AG04449 (cell line): ENCODE measurements at regions of chr14 and their contacts with region 1.

Region 1: GRCh38 chr14:94129111-94129757 is at the start of gene IFI27L2:
- DNase-seq: no peak
- H3K4me3 ChIP-seq: peak within 1 kb of the TSS; percentile 73
- CTCF ChIP-seq: peak; percentile 29

Region 2: DNA sequence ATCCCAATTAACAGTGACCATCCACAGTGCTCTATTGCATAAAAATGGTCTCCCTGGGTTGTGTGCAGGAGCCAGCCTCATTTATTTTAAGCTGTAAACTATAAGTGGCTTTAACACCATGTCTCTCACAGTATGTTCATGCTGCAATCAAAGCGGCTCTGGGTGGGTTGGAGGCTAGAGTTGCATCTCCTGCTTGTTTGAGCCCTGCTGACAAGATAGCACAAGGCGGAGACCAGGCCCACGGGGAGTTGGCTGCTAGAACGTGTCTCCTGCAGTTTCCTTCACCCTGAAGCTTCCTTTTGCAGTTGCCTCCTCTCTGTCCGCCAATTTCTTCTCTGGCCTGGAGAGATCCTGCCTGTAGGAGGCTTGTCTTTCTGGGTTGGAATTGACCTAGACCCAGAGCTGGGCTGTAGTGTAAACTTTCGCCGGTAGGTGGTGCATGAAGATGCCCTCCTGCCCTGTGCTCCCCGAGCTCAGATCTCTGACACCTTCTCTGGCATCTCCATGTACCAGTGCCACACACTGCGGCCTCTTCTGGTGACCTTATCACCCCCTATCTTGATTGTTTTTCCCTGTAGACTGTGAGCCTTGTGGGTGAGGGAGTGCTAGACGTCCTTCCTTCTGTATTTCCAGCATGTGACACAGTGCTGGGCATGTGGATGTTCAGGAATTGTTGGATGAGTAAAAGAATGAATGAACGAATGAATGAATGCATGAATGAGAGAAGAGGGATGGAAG is 92.8 kb before region 1 on chr14:
- CTCF ChIA-PET with region 1: interaction called, 348 read pairs
- POLR2A ChIA-PET with region 1: no interaction called
- DNase-seq: no peak
- H3K4me3 ChIP-seq: no peak overlapping the region
- CTCF ChIP-seq: peak; percentile 87

Region 3: GRCh38 chr14:94080471-94081289 is 48.6 kb before region 1 on chr14 and contains the start of gene DDX24:
- CTCF ChIA-PET with region 1: interaction called, 17 read pairs
- POLR2A ChIA-PET with region 1: interaction called, 4 read pairs
- DNase-seq: peak; percentile 66
- H3K4me3 ChIP-seq: peak within 1 kb of the TSS; percentile 95
- CTCF ChIP-seq: no peak

Region 4: GRCh38 chr14:94143239-94143638 is 14.0 kb after region 1 on chr14:
- CTCF ChIA-PET with region 1: interaction called, 39 read pairs
- POLR2A ChIA-PET with region 1: no interaction called
- DNase-seq: no peak
- H3K4me3 ChIP-seq: no peak overlapping the region
- CTCF ChIP-seq: peak; percentile 25

Region 5: GRCh38 chr14:94307410-94307992 is 178.3 kb after region 1 on chr14:
- CTCF ChIA-PET with region 1: interaction called, 16 read pairs
- POLR2A ChIA-PET with region 1: no interaction called
- DNase-seq: no peak
- H3K4me3 ChIP-seq: no peak overlapping the region
- CTCF ChIP-seq: peak; percentile 12